ENCODE measurements at regions of chr1 and their contacts with region 1.

Region 1: DNA sequence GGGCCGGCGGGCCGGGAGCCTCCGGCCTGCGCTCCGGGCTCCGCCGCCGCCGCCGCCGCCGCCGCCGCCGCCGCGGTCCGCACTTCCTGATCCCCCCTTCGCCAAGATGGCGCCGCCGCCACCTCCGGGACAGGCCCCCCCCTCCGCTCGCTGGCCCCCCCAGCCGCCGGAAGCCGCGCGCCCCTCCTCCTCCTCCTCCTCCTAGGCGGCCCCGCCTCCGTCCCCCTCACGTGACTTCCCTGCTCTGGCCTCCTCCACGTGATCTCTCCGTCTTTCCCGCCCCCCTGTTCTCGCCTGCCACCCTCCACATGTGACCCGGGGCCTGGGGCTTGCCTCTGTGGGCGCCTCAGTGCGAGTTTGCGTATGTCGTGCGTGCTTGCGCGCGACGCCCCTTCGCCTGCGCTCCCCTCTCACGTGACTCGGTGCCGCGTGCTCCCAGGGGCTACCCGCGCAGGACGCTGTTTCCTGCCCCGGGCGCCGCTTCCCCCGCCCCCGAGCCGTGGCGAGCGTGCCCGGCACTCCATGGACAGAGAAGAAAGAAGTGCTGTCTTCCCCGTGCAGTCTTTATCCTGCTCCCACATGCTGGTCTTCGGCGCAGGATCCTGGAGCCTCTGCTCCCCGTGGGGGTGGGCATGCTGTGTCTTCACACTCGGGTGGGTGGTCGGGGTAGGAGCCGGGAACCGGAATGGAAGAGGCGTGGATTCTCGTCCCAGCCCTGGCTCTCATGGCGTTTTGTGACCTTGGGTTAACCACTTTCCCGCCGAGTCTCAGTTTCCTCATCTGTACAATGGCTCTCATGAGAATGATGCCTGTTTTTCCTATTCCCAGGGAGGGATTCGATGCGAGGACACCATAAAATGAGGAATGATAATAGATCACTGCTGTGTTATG is at the start of gene UBE2Q1:
- DNase-seq: peak; percentile 98 to 99
- H3K4me3 ChIP-seq: peak within 1 kb of the TSS; percentile 93 to 97
- H3K27ac ChIP-seq: peak within 1 kb of the TSS; percentile 85 to 88
- H3K4me1 ChIP-seq: peaks cover 5 to 16% of the 10 kb centered on the region in 2 donors
- H3K27me3 ChIP-seq: no peaks in the 10 kb centered on the region
- CTCF ChIP-seq: no peak
- total RNA-seq, gene UBE2Q1: 10.6 TPM

Region 2: GRCh38 chr1:154272217-154272998 is 286.4 kb before region 1 on chr1 and contains the start of gene HAX1:
- intact Hi-C with region 1: loop called (anchors 2 kb)
- DNase-seq: peak; percentile 87 to 97
- H3K4me3 ChIP-seq: peak within 1 kb of the TSS; percentile 75 to 97
- H3K27ac ChIP-seq: peak within 1 kb of the TSS; percentile 81 to 96
- H3K4me1 ChIP-seq: peaks cover 0 to 5% of the 10 kb centered on the region in 2 donors
- H3K27me3 ChIP-seq: no peaks in the 10 kb centered on the region
- CTCF ChIP-seq: peak; percentile 75 to 90 (median 89)
- total RNA-seq, gene HAX1: 270 TPM

Region 3: GRCh38 chr1:154431586-154432373 is 127.0 kb before region 1 on chr1:
- intact Hi-C with region 1: loop called (anchors 5 kb)
- DNase-seq: peak; percentile 68 to 76
- H3K4me3 ChIP-seq: no peak overlapping the region
- H3K27ac ChIP-seq: no peak overlapping the region
- H3K4me1 ChIP-seq: peaks cover 0 to 21% of the 10 kb centered on the region in 2 donors
- H3K27me3 ChIP-seq: no peaks in the 10 kb centered on the region
- CTCF ChIP-seq: no peak

Region 4: DNA sequence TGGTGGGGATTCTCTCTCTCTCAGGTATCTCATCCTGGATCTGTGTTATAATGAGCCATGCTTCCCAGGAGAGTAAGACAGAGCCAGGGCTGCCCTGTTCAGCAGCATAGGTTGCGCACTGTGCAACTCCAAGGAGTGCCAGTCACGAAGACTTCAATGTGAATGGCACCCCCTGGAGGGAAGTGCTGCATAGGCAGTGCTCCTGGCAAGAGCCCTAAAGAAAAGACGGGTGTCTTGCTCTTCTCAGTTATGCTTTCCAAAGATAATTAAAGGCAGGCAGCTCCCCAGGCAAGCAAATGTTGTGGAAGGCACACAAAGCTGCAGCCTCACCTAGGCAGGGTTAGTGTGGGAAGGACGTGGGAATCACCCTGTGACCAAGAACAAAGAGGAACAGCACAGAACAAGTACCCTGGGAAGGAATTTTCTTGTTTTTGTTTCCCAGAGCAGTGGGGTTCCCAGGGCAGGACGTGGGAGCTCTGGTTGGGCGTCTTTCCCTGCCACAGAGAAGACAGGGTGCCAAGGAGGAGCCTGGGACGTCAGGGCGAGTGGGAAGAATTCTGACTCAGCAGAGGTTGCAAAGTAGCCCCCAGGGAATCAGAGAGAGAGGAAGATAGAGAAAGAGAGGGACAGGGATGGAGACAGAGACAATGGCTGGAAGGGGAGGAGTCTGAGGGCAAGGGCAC is 190.4 kb after region 1 on chr1:
- intact Hi-C with region 1: no loop called
- DNase-seq: peak in 1 of 2 donors; percentile 58
- H3K4me3 ChIP-seq: no peak overlapping the region
- H3K27ac ChIP-seq: no peak overlapping the region
- H3K4me1 ChIP-seq: no peaks in the 10 kb centered on the region
- H3K27me3 ChIP-seq: no peaks in the 10 kb centered on the region
- CTCF ChIP-seq: no peak

Region 5: DNA sequence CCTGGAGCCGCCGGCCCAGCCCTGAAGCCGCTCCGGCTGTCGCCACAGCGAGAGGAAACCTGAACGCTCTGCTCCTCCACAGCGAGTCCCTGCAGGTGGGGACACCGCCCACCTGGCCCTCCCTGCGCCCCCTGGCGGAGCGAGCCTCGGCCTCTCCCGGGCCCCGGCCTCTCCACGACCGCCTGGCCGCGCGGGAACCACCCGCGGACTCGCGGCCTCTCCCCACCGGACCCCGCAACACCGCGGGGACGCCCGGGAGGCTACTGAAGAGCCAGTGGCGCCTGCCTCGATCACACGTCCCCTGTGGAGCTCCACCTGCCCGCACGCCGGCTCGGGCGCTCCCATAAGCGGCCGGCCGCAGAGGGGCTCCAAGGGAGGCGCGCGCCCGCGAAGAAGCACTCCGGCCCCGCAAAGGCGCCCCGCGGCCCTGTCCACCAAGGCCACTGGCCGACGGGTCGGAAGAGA is 201.7 kb after region 1 on chr1:
- intact Hi-C with region 1: loop called (anchors 2 kb)
- DNase-seq: peak in 1 of 2 donors; percentile 65
- H3K4me3 ChIP-seq: peak overlapping the region; percentile 16 to 40
- H3K27ac ChIP-seq: no peak overlapping the region
- H3K4me1 ChIP-seq: peaks cover 0 to 4% of the 10 kb centered on the region in 2 donors
- H3K27me3 ChIP-seq: no peaks in the 10 kb centered on the region
- CTCF ChIP-seq: peak; percentile 50 to 75 (median 71)

Region 6: GRCh38 chr1:154936555-154937084 is 377.8 kb after region 1 on chr1 and contains the start of gene PMVK:
- intact Hi-C with region 1: loop called (anchors 1 kb)
- DNase-seq: peak; percentile 84 to 98
- H3K4me3 ChIP-seq: peak within 1 kb of the TSS; percentile 73 to 75
- H3K27ac ChIP-seq: peak within 1 kb of the TSS; percentile 97 to 98
- H3K4me1 ChIP-seq: peaks cover 0 to 13% of the 10 kb centered on the region in 2 donors
- H3K27me3 ChIP-seq: no peaks in the 10 kb centered on the region
- CTCF ChIP-seq: peak in 2 of 3 experiments; percentile 26 to 42
- total RNA-seq, gene PMVK: 9.6 TPM

Measured in ascending aorta (tissue), 2 donors.